ENCODE measurements at regions of chr11 and their contacts with region 1.

Region 1: GRCh38 chr11:108222686-108223448 is at the start of gene ATM:
- DNase-seq: peak; percentile 99
- H3K4me3 Mint-ChIP-seq: no peak within 1 kb of the TSS
- H3K27ac Mint-ChIP-seq: no peak within 1 kb of the TSS
- H3K4me1 Mint-ChIP-seq: peaks cover 49% of the 10 kb centered on the region
- H3K27me3 Mint-ChIP-seq: no peaks in the 10 kb centered on the region
- total RNA-seq, gene ATM: 31.3 to 31.6 TPM

Region 2: GRCh38 chr11:107565219-107565937 is 657.5 kb before region 1 on chr11 and contains the start of gene ALKBH8:
- CTCF ChIA-PET with region 1: no interaction called
- POLR2A ChIA-PET with region 1: no interaction called
- intact Hi-C with region 1: loop called (anchors 5 kb)
- DNase-seq: peak; percentile 88
- H3K4me3 Mint-ChIP-seq: peak within 1 kb of the TSS; percentile 92
- H3K27ac Mint-ChIP-seq: peak within 1 kb of the TSS; percentile 94
- H3K4me1 Mint-ChIP-seq: peaks cover 45% of the 10 kb centered on the region
- H3K27me3 Mint-ChIP-seq: no peaks in the 10 kb centered on the region
- total RNA-seq, gene ALKBH8: 9.3 to 11.2 TPM

Region 3: GRCh38 chr11:107928046-107928766 is 294.7 kb before region 1 on chr11 and contains the start of gene RAB39A:
- CTCF ChIA-PET with region 1: no interaction called
- POLR2A ChIA-PET with region 1: no interaction called
- intact Hi-C with region 1: loop called (anchors 2 kb)
- DNase-seq: peak; percentile 85
- H3K4me3 Mint-ChIP-seq: peak within 1 kb of the TSS; percentile 66
- H3K27ac Mint-ChIP-seq: no peak within 1 kb of the TSS
- H3K4me1 Mint-ChIP-seq: peaks cover 13% of the 10 kb centered on the region
- H3K27me3 Mint-ChIP-seq: peaks cover 34% of the 10 kb centered on the region
- total RNA-seq, gene RAB39A: 0.29 to 0.71 TPM

Region 4: GRCh38 chr11:108147150-108147549 is 75.7 kb before region 1 on chr11:
- CTCF ChIA-PET with region 1: no interaction called
- POLR2A ChIA-PET with region 1: no interaction called
- intact Hi-C with region 1: no loop called
- DNase-seq: no peak
- H3K4me3 Mint-ChIP-seq: no peak overlapping the region
- H3K27ac Mint-ChIP-seq: no peak overlapping the region
- H3K4me1 Mint-ChIP-seq: peaks cover 12% of the 10 kb centered on the region
- H3K27me3 Mint-ChIP-seq: no peaks in the 10 kb centered on the region

Region 5: DNA sequence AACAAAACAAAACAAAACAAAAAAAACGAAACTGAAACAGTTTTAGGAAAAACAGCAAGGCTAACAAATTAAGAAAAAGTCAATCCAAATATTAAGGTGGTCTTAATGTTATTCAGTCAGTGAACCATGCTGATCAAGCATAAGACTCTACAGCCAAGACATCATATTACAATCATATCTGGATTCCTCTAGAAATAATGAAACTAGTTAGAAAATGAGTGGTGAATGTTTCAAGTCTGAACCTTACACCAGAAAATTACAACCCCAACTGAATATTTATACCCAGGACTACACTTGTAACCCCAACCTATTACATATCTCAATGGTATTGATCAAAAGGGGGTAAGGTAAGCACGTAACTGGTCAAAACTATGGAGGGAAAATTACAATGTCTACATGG is 52.7 kb before region 1 on chr11:
- CTCF ChIA-PET with region 1: interaction called, 3 read pairs
- POLR2A ChIA-PET with region 1: interaction called, 4 read pairs
- intact Hi-C with region 1: loop called (anchors 1 kb)
- DNase-seq: no peak
- H3K4me3 Mint-ChIP-seq: no peak overlapping the region
- H3K27ac Mint-ChIP-seq: no peak overlapping the region
- H3K4me1 Mint-ChIP-seq: peaks cover 43% of the 10 kb centered on the region
- H3K27me3 Mint-ChIP-seq: no peaks in the 10 kb centered on the region

Region 6: DNA sequence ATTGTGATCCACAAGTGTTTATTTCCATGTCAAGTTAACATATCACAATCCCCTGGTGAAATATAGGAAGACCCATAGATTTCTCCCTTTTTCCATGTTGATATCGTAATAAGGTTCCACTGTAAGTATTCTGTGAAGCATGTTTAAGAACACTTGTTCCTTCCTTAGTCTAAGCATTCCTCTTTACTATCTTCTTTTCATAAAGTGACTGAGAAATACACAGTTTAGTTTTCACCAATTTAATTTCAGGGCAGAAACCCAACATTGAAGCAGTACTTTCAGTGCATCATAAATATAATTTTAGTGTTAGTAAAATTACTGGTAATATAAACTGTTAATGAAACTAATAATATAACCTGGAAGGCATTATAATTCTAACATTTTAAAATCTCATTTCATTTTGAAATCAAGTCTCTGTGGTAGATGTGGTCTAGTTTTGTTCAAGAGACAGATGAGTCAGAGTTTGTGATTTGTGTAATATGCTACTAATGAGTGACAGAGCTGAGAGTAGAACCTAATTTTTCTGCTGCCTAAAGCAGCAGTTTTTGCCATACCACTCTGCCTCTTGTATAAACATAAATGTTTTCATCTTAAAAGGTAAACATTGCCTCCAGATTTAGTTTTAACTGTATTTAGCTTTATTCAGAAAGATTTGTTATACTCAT is 79.4 kb after region 1 on chr11:
- CTCF ChIA-PET with region 1: interaction called, 4 read pairs
- POLR2A ChIA-PET with region 1: interaction called, 8 read pairs
- intact Hi-C with region 1: loop called (anchors 1 kb)
- DNase-seq: no peak
- H3K4me3 Mint-ChIP-seq: no peak overlapping the region
- H3K27ac Mint-ChIP-seq: no peak overlapping the region
- H3K4me1 Mint-ChIP-seq: peaks cover 20% of the 10 kb centered on the region
- H3K27me3 Mint-ChIP-seq: no peaks in the 10 kb centered on the region

Region 7: DNA sequence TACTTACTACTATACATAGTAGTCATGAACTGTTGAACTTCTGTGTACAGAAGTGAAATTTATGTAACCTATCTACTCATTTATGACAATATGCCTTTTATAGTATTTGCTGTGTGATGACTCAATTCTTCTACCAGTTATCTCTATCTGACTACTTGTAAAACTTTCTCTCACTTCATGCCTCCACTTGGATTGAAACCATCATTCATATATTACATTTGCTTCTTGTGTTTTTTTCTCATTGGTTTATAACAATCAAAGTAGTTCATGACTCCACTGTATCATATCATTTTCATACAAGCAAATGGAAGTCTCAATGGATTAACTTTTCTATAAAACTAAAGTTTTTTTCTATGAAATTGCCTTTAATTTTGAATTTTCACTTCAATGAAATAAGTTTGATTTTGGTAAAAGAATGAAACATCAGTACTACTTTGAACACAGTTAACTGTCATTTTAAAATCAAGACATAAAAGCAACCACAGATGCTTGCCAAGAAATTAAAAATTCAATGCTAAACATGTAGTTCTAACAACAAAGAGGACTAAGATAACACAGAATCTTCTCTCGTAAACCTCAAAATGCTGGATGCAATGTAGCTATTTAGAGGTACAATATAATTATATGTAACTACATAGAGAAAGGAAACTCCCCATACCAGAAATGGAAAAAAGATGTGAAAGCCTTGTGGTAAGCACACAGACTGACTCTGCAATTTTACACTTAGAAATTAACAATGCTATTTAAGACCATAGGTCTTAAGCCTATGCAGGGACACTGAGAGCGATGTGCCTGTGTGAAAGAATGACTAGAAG is 398.3 kb after region 1 on chr11:
- CTCF ChIA-PET with region 1: no interaction called
- POLR2A ChIA-PET with region 1: no interaction called
- intact Hi-C with region 1: loop called (anchors 1 kb)
- DNase-seq: no peak
- H3K4me3 Mint-ChIP-seq: no peak overlapping the region
- H3K27ac Mint-ChIP-seq: no peak overlapping the region
- H3K4me1 Mint-ChIP-seq: peaks cover 21% of the 10 kb centered on the region
- H3K27me3 Mint-ChIP-seq: peaks cover 20% of the 10 kb centered on the region

Measured in activated CD4-positive, alpha-beta memory T cell treated with anti-CD3 and anti-CD28 coated beads for 36 hours (primary cell).